WTC11 (cell line): ENCODE measurements at regions of chr2 and their contacts with region 1.

Region 1: DNA sequence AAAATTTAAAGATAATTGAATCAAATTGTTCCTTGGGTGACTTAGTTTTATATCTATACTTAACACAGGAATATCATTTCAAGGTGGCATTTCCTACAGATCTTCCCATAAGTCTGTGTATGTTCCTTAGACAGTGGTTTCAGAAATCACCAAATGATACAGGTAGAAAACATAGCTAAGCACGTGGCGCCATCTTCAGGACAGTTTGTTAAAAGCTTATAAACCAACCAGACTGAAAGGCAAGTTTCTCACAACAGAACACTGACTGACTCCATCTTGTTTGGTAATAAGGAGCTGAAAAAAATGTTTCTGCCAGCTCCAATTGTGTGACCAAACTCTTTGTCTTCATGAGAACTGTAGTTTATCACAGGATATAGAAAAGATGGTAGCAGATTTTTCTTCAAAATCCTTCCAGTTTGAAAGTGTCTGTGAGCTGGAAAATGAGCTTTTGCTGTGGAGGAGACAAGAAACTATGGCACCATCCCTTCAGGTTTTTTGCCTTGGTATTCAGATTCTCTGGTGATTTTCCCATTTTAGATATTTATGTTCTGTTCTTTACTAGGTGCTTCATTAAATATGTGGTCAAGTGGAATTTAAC is 34.8 kb upstream of the NEUROD1 start:
- DNase-seq: peak; percentile 68
- ATAC-seq: peak; percentile 84
- H3K4me3 Mint-ChIP-seq: no peak overlapping the region
- H3K27ac Mint-ChIP-seq: no peak overlapping the region
- H3K4me1 Mint-ChIP-seq: no peaks in the 10 kb centered on the region
- H3K27me3 Mint-ChIP-seq: no peaks in the 10 kb centered on the region; the same call in 1 of the 2 replicates
- CTCF ChIP-seq: peak; percentile 40

Region 2: GRCh38 chr2:181457121-181457740 is 257.9 kb before region 1 on chr2 and contains the start of gene ITGA4:
- CTCF ChIA-PET with region 1: interaction called, 11 read pairs
- POLR2A ChIA-PET with region 1: no interaction called
- DNase-seq: peak; percentile 88
- ATAC-seq: peak; percentile 97
- H3K4me3 Mint-ChIP-seq: peak within 1 kb of the TSS; percentile 78
- H3K27ac Mint-ChIP-seq: no peak within 1 kb of the TSS
- H3K4me1 Mint-ChIP-seq: peaks cover 12% of the 10 kb centered on the region
- H3K27me3 Mint-ChIP-seq: peaks cover 62% of the 10 kb centered on the region
- CTCF ChIP-seq: peak; percentile 45
- total RNA-seq, gene ITGA4: 2.0 to 3.0 TPM (median 2.7 TPM) in 3 replicates

Region 3: GRCh38 chr2:181466661-181467576 is 248.2 kb before region 1 on chr2:
- CTCF ChIA-PET with region 1: interaction called, 20 read pairs
- POLR2A ChIA-PET with region 1: no interaction called
- DNase-seq: peak; percentile 81
- ATAC-seq: peak; percentile 60
- H3K4me3 Mint-ChIP-seq: no peak overlapping the region
- H3K27ac Mint-ChIP-seq: no peak overlapping the region
- H3K4me1 Mint-ChIP-seq: peaks cover 16% of the 10 kb centered on the region
- H3K27me3 Mint-ChIP-seq: peaks cover 10% of the 10 kb centered on the region
- CTCF ChIP-seq: peak; percentile 77

Region 4: DNA sequence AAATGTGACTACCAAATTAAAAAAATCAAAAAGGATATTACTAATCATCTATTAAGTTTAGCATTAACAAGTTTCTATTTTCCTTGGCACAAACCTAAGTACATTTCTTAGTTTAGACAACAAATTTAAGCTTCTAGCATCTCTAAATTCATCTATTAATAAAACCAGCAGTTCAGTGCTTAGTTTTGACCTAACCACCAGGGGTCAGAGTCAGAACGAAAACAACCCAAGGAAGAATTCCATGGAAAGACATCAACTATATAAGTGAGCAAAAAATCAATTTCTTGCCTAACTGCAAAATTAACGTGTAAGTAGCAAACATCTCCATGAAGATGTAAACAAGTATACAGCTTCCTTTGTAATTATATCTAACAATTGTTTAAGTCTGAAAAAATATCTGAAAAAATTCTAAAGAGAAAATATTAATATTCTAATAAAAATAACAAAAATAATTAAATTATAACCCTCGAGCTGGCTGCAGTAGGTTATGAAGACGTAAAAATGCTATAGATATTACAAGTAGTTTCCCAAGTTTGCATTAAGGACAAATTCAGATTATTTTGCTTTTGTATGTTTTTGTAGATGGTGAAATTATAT is 141.9 kb before region 1 on chr2:
- CTCF ChIA-PET with region 1: interaction called, 42 read pairs
- POLR2A ChIA-PET with region 1: no interaction called
- DNase-seq: no peak
- ATAC-seq: peak; percentile 47
- H3K4me3 Mint-ChIP-seq: no peak overlapping the region
- H3K27ac Mint-ChIP-seq: no peak overlapping the region
- H3K4me1 Mint-ChIP-seq: peaks cover 4% of the 10 kb centered on the region
- H3K27me3 Mint-ChIP-seq: no peaks in the 10 kb centered on the region
- CTCF ChIP-seq: no peak

Region 5: DNA sequence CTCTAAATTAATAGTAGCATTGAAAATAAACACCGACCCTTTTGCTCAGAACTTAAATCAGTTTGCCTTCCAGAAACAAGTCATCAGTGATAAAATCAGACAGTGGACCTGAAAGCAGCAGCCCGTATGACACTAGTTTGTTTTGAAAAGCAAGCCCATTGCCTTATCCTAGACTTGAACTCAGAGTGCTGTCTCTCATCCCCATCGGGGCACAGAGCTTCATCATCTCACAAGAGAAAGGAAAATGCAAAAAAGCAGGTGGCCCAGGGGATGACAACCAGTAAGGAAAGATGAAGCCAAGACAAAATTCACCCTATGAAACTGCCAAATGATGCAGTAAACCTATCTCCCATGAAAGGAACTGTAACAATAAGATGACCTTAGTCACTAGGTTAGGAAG is 129.4 kb before region 1 on chr2:
- CTCF ChIA-PET with region 1: interaction called, 12 read pairs
- POLR2A ChIA-PET with region 1: no interaction called
- DNase-seq: no peak
- ATAC-seq: no peak
- H3K4me3 Mint-ChIP-seq: no peak overlapping the region
- H3K27ac Mint-ChIP-seq: no peak overlapping the region
- H3K4me1 Mint-ChIP-seq: peaks cover 18% of the 10 kb centered on the region
- H3K27me3 Mint-ChIP-seq: no peaks in the 10 kb centered on the region
- CTCF ChIP-seq: no peak

Region 6: GRCh38 chr2:181656450-181657291 is 58.5 kb before region 1 on chr2 and contains the start of gene CERKL:
- CTCF ChIA-PET with region 1: interaction called, 20 read pairs
- POLR2A ChIA-PET with region 1: no interaction called
- DNase-seq: peak; percentile 82
- ATAC-seq: peak; percentile 81
- H3K4me3 Mint-ChIP-seq: peak within 1 kb of the TSS; percentile 81
- H3K27ac Mint-ChIP-seq: no peak within 1 kb of the TSS; the same call in 1 of the 2 replicates
- H3K4me1 Mint-ChIP-seq: peaks cover 36% of the 10 kb centered on the region
- H3K27me3 Mint-ChIP-seq: peaks cover 82% of the 10 kb centered on the region
- CTCF ChIP-seq: no peak
- total RNA-seq, gene CERKL: 0.14 to 0.24 TPM in 2 of 3 replicates, not detected in the other

Region 7: GRCh38 chr2:181836583-181836982 is 121.5 kb after region 1 on chr2:
- CTCF ChIA-PET with region 1: no interaction called
- POLR2A ChIA-PET with region 1: no interaction called
- DNase-seq: no peak
- ATAC-seq: no peak
- H3K4me3 Mint-ChIP-seq: no peak overlapping the region
- H3K27ac Mint-ChIP-seq: no peak overlapping the region
- H3K4me1 Mint-ChIP-seq: no peaks in the 10 kb centered on the region
- H3K27me3 Mint-ChIP-seq: no peaks in the 10 kb centered on the region
- CTCF ChIP-seq: no peak